ENCODE measurements at regions of chr12 and their contacts with region 1.

Region 1: GRCh38 chr12:131345521-131346436 is 365.1 kb upstream of the SFSWAP start:
- ATAC-seq: peak in 7 of 8 experiments; percentile 20 to 67 (median 54)
- H3K4me3 ChIP-seq: no peak overlapping the region
- H3K27ac ChIP-seq: peak overlapping the region in 1 of 2 donors; percentile 56
- H3K4me1 ChIP-seq: peaks cover 10 to 25% of the 10 kb centered on the region in 2 donors

Region 2: GRCh38 chr12:131621701-131622421 is 276.1 kb after region 1 on chr12:
- in situ Hi-C with region 1: loop called in 6 of 9 experiments (anchors 5 to 10 kb)
- ATAC-seq: peak in 5 of 8 experiments; percentile 74 to 85 (median 83)
- H3K4me3 ChIP-seq: no peak overlapping the region
- H3K27ac ChIP-seq: peak overlapping the region in 1 of 2 donors; percentile 53
- H3K4me1 ChIP-seq: peaks cover 7 to 22% of the 10 kb centered on the region in 2 donors

Region 3: DNA sequence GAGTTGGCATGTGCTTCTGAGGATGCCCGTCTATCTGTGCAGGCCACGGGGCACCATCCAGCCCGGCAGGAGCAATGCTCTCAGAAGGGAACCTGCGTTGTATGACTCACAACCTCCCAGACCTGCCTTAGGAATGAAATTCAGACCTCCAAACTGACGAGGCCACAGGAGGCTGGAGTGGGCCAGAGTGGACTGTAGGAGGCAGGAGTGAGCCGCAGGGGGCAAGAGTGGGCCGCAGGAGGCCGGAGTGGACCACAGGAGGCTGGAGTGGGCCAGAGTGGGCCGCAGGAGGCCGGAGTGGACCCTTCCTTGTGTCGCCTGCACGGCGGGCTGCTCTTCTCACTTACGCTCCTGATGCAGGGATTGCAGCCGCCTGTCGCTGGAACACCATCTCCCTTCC is 1133.1 kb after region 1 on chr12:
- in situ Hi-C with region 1: no loop called
- ATAC-seq: peak in 3 of 8 experiments; percentile 8 to 37 (median 27)
- H3K4me3 ChIP-seq: no peak overlapping the region
- H3K27ac ChIP-seq: no peak overlapping the region
- H3K4me1 ChIP-seq: peaks cover 11 to 17% of the 10 kb centered on the region in 2 donors